Activated naive CD4-positive, alpha-beta T cell treated with anti-CD3 and anti-CD28 coated beads for 36 hours (primary cell): ENCODE measurements at regions of chr19 and their contacts with region 1.

Region 1: GRCh38 chr19:5967994-5968430 is 9.9 kb downstream of the RANBP3 start:
- DNase-seq: peak; percentile 86
- H3K4me3 Mint-ChIP-seq: peak overlapping the region; percentile 1
- H3K27ac Mint-ChIP-seq: peak overlapping the region; percentile 80
- H3K4me1 Mint-ChIP-seq: peaks cover 87% of the 10 kb centered on the region
- H3K27me3 Mint-ChIP-seq: no peaks in the 10 kb centered on the region

Region 2: DNA sequence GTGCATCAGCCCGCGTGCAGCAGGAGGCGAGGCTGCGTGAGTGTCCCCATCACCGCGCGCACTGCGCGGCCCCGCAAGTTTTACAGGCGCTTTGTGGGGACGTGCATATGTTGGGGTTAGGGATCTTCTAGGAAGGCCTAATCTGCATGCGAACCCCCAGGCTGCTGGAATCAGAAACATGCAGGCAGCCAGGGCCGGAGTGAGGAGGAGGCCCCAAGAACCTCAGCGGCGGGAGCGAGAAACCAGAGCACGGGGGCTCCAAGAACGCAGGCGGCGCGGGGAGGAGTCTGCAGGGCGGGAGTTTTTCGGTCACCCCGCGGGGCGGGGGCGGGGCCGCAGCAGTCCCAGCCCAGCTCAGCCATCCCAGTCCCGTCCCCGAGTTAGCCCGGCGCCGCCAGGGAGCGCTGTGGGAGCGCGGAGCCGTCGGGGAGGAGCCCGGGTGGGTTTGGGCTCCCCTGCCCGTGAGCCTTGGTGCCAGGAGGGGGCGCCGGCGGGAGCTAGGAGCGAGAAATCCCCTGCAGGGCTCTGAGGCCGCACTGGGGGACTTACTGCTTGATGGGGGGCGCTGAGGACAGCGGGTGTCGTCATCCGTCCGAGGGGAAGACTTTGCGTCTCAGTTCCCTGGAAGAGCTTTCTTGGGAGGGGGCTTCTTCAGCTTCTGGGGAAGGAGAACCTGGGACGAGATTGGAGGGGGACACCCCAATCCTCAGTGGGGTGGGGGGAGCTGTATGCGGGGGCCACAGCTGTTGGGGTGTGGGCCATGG is 164.1 kb before region 1 on chr19:
- CTCF ChIA-PET with region 1: interaction called, 18 read pairs
- intact Hi-C with region 1: no loop called
- DNase-seq: peak; percentile 96
- H3K4me3 Mint-ChIP-seq: peak overlapping the region; percentile 70
- H3K27ac Mint-ChIP-seq: no peak overlapping the region
- H3K4me1 Mint-ChIP-seq: peaks cover 25% of the 10 kb centered on the region
- H3K27me3 Mint-ChIP-seq: peaks cover 19% of the 10 kb centered on the region

Region 3: DNA sequence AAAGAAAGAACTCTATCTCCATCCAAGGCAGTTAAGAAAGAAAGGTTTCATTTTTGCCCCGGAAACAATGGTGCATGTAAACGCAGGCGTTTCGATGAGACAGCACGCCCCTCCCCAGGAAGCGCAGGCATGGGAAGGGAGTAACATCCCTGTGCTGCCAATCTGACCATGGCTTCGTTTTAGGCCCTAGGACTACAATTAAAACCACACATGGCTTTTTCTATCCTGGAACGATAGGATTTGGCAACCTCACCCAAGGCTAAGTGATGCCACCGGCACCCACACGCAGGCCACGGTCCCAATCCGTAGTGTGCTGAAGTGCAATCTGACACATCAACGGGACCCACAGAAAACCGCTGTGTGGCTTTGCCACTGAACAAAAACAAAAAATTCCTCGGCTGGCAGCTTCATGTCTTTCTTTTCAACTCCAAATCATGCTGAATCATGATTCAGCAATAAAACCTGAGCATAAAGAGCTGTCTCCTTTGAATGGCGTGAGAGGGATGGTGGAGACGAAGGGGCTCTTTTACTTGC is 14.3 kb before region 1 on chr19:
- CTCF ChIA-PET with region 1: interaction called, 48 read pairs
- intact Hi-C with region 1: loop called (anchors 2 kb)
- DNase-seq: peak; percentile 63
- H3K4me3 Mint-ChIP-seq: peak overlapping the region; percentile 36
- H3K27ac Mint-ChIP-seq: peak overlapping the region; percentile 87
- H3K4me1 Mint-ChIP-seq: peaks cover 92% of the 10 kb centered on the region
- H3K27me3 Mint-ChIP-seq: no peaks in the 10 kb centered on the region

Region 4: GRCh38 chr19:5987077-5987818 is 19.2 kb after region 1 on chr19:
- CTCF ChIA-PET with region 1: interaction called, 23 read pairs
- intact Hi-C with region 1: no loop called
- DNase-seq: peak; percentile 84
- H3K4me3 Mint-ChIP-seq: peak overlapping the region; percentile 48
- H3K27ac Mint-ChIP-seq: no peak overlapping the region
- H3K4me1 Mint-ChIP-seq: peaks cover 24% of the 10 kb centered on the region
- H3K27me3 Mint-ChIP-seq: no peaks in the 10 kb centered on the region

Region 5: GRCh38 chr19:6047252-6047651 is 79.2 kb after region 1 on chr19:
- CTCF ChIA-PET with region 1: no interaction called
- intact Hi-C with region 1: no loop called
- DNase-seq: no peak
- H3K4me3 Mint-ChIP-seq: no peak overlapping the region
- H3K27ac Mint-ChIP-seq: no peak overlapping the region
- H3K4me1 Mint-ChIP-seq: peaks cover 3% of the 10 kb centered on the region
- H3K27me3 Mint-ChIP-seq: no peaks in the 10 kb centered on the region